Heart right ventricle (tissue), 16 donors: ENCODE measurements at regions of chr16 and their contacts with region 1.

Region 1: GRCh38 chr16:16007743-16008111 is 58.3 kb downstream of the ABCC1 start:
- DNase-seq: no peak
- ATAC-seq: no peak
- H3K4me3 ChIP-seq: no peak overlapping the region
- H3K27ac ChIP-seq: peak overlapping the region in 1 of 10 donors; percentile 36
- H3K4me1 ChIP-seq: peaks cover 0 to 14% (median 3%) of the 10 kb centered on the region in 9 donors
- H3K27me3 ChIP-seq: no peaks in the 10 kb centered on the region
- CTCF ChIP-seq: no peak

Region 2: GRCh38 chr16:15482068-15482747 is 525.5 kb before region 1 on chr16:
- intact Hi-C with region 1: no loop called
- DNase-seq: peak in 1 of 2 donors; percentile 58
- ATAC-seq: peak; percentile 50 to 96 (median 84)
- H3K4me3 ChIP-seq: no peak overlapping the region
- H3K27ac ChIP-seq: peak overlapping the region in 3 of 10 donors; percentile 30 to 45 (median 34)
- H3K4me1 ChIP-seq: peaks cover 0 to 12% (median 0%) of the 10 kb centered on the region in 9 donors
- H3K27me3 ChIP-seq: no peaks in the 10 kb centered on the region
- CTCF ChIP-seq: peak in 2 of 9 donors; percentile 9 to 16

Region 3: GRCh38 chr16:15899538-15900100 is 108.1 kb before region 1 on chr16:
- intact Hi-C with region 1: loop called in 1 of 10 experiments (anchors 5 kb)
- DNase-seq: no peak
- ATAC-seq: no peak
- H3K4me3 ChIP-seq: no peak overlapping the region
- H3K27ac ChIP-seq: no peak overlapping the region
- H3K4me1 ChIP-seq: peaks cover 0 to 5% (median 0%) of the 10 kb centered on the region in 9 donors
- H3K27me3 ChIP-seq: no peaks in the 10 kb centered on the region
- CTCF ChIP-seq: no peak